Activated CD8-positive, alpha-beta T cell treated with anti-CD3 and anti-CD28 coated beads, Interleukin-2, amount 10 ng/mL, durations not matched to agents 7 days and 5 days (primary cell): ENCODE measurements at regions of chr17 and their contacts with region 1.

Region 1: DNA sequence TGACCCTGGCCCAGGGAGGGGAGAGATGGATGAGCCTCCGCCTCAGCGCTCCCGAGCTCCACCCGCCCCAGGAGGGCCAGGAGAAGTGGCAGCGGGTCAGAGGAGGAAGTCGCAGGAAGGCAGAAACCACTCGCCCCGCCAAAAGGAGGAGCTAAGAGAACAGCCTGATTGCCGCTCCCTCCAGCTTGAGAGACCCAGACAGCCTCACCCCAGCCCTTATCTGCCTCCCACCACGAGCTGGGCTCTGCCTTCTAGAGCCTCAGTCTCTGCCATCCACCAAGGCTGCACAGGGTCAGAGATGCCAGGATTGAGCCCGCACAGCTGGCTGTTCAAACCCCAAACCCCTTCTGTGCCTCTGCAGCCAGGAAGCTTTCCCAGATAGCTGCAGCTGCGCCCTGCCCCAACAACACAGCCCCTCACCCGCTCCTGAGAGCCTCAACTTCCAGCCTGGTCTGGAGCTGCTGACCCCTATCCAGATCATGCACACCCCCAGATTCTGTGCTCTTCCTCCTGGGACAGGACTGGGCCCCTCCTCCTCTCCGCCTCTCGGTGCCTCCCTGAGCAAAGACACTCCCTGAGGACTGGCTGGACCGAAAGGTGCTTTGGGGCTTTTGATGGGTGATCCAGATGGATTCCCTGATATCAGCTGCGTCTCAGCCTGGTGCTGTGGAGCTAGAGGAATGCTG is 1.0 kb upstream of the ATP2A3 start:
- DNase-seq: peak; percentile 90
- ATAC-seq: peak; percentile 73
- H3K4me3 Mint-ChIP-seq: peak overlapping the region; percentile 86
- H3K27ac Mint-ChIP-seq: peak overlapping the region; percentile 94
- H3K4me1 Mint-ChIP-seq: peaks cover 42% of the 10 kb centered on the region
- H3K27me3 Mint-ChIP-seq: no peaks in the 10 kb centered on the region

Region 2: GRCh38 chr17:4004517-4005295 is 39.4 kb after region 1 on chr17:
- CTCF ChIA-PET with region 1: interaction called, 47 read pairs
- POLR2A ChIA-PET with region 1: no interaction called
- DNase-seq: peak; percentile 64
- ATAC-seq: peak; percentile 77
- H3K4me3 Mint-ChIP-seq: no peak overlapping the region
- H3K27ac Mint-ChIP-seq: no peak overlapping the region
- H3K4me1 Mint-ChIP-seq: peaks cover 3% of the 10 kb centered on the region
- H3K27me3 Mint-ChIP-seq: peaks cover 2% of the 10 kb centered on the region